GM12878 (cell line): ENCODE measurements at regions of chr1 and their contacts with region 1.

Region 1: DNA sequence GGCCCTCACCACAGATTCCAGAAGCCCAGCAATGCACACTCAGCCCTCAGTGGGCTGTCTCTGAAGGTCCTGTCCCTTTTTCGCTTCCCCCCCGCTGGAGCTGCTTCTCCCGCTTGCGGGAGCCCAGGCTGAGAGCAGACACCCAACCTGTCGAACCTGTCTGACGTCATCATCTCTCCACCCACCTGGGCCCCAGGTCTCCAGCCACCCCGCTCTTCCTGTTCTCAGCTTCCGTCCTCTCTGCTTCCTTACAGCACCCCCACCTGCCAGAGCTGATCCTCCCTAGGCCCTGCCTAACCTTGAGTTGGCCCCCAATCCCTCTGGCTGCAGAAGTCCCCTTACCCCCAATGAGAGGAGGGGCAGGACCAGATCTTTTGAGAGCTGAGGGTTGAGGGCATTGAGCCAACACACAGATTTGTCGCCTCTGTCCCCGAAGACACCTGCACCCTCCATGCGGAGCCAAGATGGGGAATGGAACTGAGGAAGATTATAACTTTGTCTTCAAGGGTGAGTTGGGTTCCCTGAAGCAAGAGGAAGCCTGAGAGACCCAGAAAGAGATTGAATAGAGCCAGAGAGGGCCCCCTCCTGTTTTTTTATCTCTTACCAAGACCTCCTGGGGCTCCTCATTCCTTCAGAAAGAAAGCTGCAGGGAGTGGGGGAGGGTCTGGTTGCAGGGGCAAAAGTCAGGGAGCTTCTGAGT is at the start of gene RAB25:
- DNase-seq: no peak
- ATAC-seq: no peak
- H3K4me3 ChIP-seq: no peak within 1 kb of the TSS
- H3K27ac ChIP-seq: no peak within 1 kb of the TSS
- H3K4me1 ChIP-seq: no peaks in the 10 kb centered on the region
- H3K27me3 ChIP-seq: no peaks in the 10 kb centered on the region
- CTCF ChIP-seq: no peak
- EP300 ChIP-seq: no peak
- POLR2A ChIP-seq: no peak
- RAD21 ChIP-seq: no peak
- polyA plus RNA-seq, gene RAB25: not detected

Region 2: GRCh38 chr1:155946633-155947219 is 114.4 kb before region 1 on chr1:
- CTCF ChIA-PET with region 1: interaction called, 30 read pairs
- POLR2A ChIA-PET with region 1: interaction called, 7 read pairs
- RAD21 ChIA-PET with region 1: interaction called, 12 read pairs
- SMC1A ChIA-PET with region 1: interaction called, 5 read pairs
- in situ Hi-C with region 1: no loop called
- intact Hi-C with region 1: no loop called
- DNase-seq: no peak
- ATAC-seq: peak; percentile 49
- H3K4me3 ChIP-seq: peak overlapping the region; percentile 12
- H3K27ac ChIP-seq: peak overlapping the region; percentile 79
- H3K4me1 ChIP-seq: peaks cover 50% of the 10 kb centered on the region
- H3K27me3 ChIP-seq: no peaks in the 10 kb centered on the region
- CTCF ChIP-seq: no peak
- EP300 ChIP-seq: no peak; a peak in 1 of 4 replicates
- POLR2A ChIP-seq: no peak
- RAD21 ChIP-seq: no peak

Region 3: GRCh38 chr1:155989242-155990004 is 71.7 kb before region 1 on chr1:
- CTCF ChIA-PET with region 1: interaction called, 62 read pairs
- POLR2A ChIA-PET with region 1: no interaction called
- RAD21 ChIA-PET with region 1: interaction called, 39 read pairs
- SMC1A ChIA-PET with region 1: interaction called, 43 read pairs
- in situ Hi-C with region 1: no loop called
- intact Hi-C with region 1: loop called (anchors 1 kb)
- DNase-seq: no peak
- ATAC-seq: peak; percentile 97
- H3K4me3 ChIP-seq: no peak overlapping the region
- H3K27ac ChIP-seq: peak overlapping the region; percentile 40; the same call in 1 of the 2 replicates
- H3K4me1 ChIP-seq: peaks cover 17% of the 10 kb centered on the region
- H3K27me3 ChIP-seq: no peaks in the 10 kb centered on the region
- CTCF ChIP-seq: peak; percentile 96 to 99 (median 99)
- EP300 ChIP-seq: no peak
- POLR2A ChIP-seq: no peak
- RAD21 ChIP-seq: peak; percentile 100

Region 4: DNA sequence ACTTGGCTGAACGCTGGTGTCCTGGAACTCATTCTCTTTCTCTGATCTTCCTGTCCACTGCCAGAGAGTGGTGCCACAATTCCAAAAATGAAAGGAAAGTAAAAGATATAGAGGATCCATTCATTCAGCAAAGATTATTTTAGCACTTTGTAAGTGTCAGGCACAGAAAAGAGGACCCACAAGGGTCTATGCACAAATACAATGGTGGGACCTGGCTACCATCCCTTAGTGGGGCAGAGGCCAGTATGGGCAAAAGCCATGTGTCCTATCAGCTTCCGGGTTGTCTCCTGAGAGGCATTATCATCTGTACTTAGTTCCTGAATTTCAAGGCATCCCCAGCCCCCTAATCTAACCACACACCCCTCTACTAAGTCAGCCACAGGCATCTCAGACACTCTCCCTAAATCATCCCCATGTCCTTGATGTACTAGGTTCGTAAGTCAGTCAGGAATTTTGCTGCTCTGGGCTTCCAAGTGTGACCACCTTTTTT is 59.4 kb before region 1 on chr1:
- CTCF ChIA-PET with region 1: interaction called, 14 read pairs
- POLR2A ChIA-PET with region 1: interaction called, 5 read pairs
- RAD21 ChIA-PET with region 1: interaction called, 6 read pairs
- SMC1A ChIA-PET with region 1: interaction called, 5 read pairs
- in situ Hi-C with region 1: no loop called
- intact Hi-C with region 1: no loop called
- DNase-seq: no peak
- ATAC-seq: peak; percentile 25; the same call in 2 of the 3 replicates
- H3K4me3 ChIP-seq: no peak overlapping the region
- H3K27ac ChIP-seq: no peak overlapping the region
- H3K4me1 ChIP-seq: no peaks in the 10 kb centered on the region
- H3K27me3 ChIP-seq: no peaks in the 10 kb centered on the region
- CTCF ChIP-seq: no peak
- EP300 ChIP-seq: no peak
- POLR2A ChIP-seq: no peak
- RAD21 ChIP-seq: no peak

Region 5: DNA sequence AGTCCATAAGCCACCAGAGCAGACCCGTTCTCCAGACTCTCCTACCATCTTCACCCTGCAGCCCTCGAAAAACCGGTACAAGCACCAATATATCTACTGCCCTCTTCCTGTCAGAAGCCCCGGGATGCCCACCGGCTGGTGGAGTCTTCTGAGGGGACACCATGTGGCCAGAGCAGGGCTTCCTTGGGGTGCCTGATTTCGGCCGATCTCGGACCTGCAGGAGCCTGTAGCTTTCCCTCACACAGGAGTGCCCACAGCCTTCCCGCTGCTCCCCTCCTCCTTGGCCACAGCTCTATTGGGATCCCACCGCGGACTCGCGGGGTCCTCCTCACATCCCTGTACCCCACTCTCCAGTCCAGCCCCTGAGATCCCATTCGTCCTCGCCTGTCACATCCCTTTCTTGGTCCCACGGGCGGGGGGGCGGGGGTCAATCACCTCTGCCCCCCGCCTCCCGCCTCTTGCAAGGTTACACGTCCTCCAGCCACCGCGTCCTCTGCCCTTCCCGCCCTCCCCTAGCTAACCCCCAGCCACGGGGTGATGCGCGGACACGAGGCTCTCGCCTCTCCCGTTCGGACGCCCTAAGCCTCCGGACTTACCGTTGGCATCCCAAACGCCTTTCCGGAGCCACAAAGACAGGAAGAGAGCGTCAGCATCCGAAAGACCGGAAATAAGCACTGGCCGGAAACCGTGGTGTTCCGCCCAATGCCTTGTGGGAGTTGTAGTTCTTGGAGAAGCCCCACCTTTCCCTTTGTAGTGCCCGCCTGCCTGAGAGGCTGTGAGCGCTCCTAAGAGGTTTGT is 40.6 kb before region 1 on chr1 and contains the start of gene SSR2:
- CTCF ChIA-PET with region 1: interaction called, 15 read pairs
- POLR2A ChIA-PET with region 1: interaction called, 7 read pairs
- RAD21 ChIA-PET with region 1: interaction called, 5 read pairs
- SMC1A ChIA-PET with region 1: interaction called, 14 read pairs
- in situ Hi-C with region 1: no loop called
- intact Hi-C with region 1: no loop called
- DNase-seq: peak; percentile 76
- ATAC-seq: peak; percentile 100
- H3K4me3 ChIP-seq: peak within 1 kb of the TSS; percentile 92
- H3K27ac ChIP-seq: peak within 1 kb of the TSS; percentile 78
- H3K4me1 ChIP-seq: peaks cover 6% of the 10 kb centered on the region
- H3K27me3 ChIP-seq: no peaks in the 10 kb centered on the region; a peak in 1 of 4 replicates
- CTCF ChIP-seq: 0 out of 6 replicates have a peak, but pooled peaks of 1 of the 3 experiments have one; percentile 9
- EP300 ChIP-seq: no peak
- POLR2A ChIP-seq: peak; percentile 91
- RAD21 ChIP-seq: no peak
- polyA plus RNA-seq, gene SSR2: 395 to 407 TPM

Region 6: GRCh38 chr1:156042828-156043227 is 18.3 kb before region 1 on chr1:
- CTCF ChIA-PET with region 1: no interaction called
- POLR2A ChIA-PET with region 1: no interaction called
- RAD21 ChIA-PET with region 1: no interaction called
- SMC1A ChIA-PET with region 1: no interaction called
- in situ Hi-C with region 1: no loop called
- intact Hi-C with region 1: no loop called
- DNase-seq: no peak
- ATAC-seq: no peak
- H3K4me3 ChIP-seq: no peak overlapping the region
- H3K27ac ChIP-seq: no peak overlapping the region
- H3K4me1 ChIP-seq: no peaks in the 10 kb centered on the region
- H3K27me3 ChIP-seq: no peaks in the 10 kb centered on the region
- CTCF ChIP-seq: no peak
- EP300 ChIP-seq: no peak
- POLR2A ChIP-seq: no peak
- RAD21 ChIP-seq: no peak

Region 7: GRCh38 chr1:156076501-156077429 is 15.7 kb after region 1 on chr1:
- CTCF ChIA-PET with region 1: interaction called, 24 read pairs
- POLR2A ChIA-PET with region 1: interaction called, 3 read pairs
- RAD21 ChIA-PET with region 1: interaction called, 3 read pairs
- SMC1A ChIA-PET with region 1: interaction called, 8 read pairs
- in situ Hi-C with region 1: no loop called
- intact Hi-C with region 1: no loop called
- DNase-seq: no peak
- ATAC-seq: peak; percentile 96
- H3K4me3 ChIP-seq: peak overlapping the region; percentile 86
- H3K27ac ChIP-seq: peak overlapping the region; percentile 37
- H3K4me1 ChIP-seq: peaks cover 10% of the 10 kb centered on the region
- H3K27me3 ChIP-seq: no peaks in the 10 kb centered on the region; a peak in 1 of 4 replicates
- CTCF ChIP-seq: no peak
- EP300 ChIP-seq: no peak
- POLR2A ChIP-seq: peak; percentile 64; the same call in 1 of the 2 replicates
- RAD21 ChIP-seq: no peak